Right cardiac atrium (tissue), 5 donors: ENCODE measurements at regions of chr2 and their contacts with region 1.

Region 1: GRCh38 chr2:28047681-28048080 is 157.2 kb downstream of the BABAM2 start:
- DNase-seq: no peak
- ATAC-seq: no peak
- H3K4me3 ChIP-seq: no peak overlapping the region
- H3K27ac ChIP-seq: no peak overlapping the region
- H3K4me1 ChIP-seq: no peaks in the 10 kb centered on the region
- H3K27me3 ChIP-seq: no peaks in the 10 kb centered on the region

Region 2: DNA sequence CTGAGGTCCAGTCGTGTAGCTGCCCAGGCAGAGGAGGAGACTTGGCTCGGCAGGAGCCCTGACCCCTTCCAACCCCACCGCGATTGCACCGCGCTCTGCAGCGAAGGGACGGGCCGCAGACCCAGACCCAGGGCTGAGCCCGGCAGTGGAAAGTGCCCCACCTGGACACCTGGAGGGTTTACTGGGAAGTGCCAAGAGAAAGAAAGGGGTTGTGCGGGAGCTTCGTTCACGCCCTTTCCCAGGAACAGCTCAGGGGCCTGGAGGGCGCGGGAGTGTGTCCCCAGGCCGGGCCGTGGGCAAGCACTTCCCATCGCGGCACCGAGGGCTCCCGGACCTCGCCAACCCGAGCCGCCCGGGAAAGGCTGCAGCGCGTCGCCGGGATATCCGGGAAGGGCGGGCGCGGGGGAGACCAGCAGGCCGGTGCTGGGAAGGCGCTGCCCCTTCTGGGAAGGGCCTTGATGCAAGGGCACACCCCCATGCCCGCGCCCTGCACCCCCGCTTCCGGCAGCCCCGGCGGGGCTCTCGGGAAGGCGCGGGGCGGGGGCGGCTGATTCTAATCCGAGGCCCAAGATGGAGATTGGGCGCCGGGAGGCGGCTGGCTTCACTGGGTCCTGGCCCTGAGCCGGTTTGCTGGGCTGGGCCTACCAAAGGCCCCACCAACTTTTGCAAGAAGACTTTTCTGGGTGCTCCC is 312.3 kb before region 1 on chr2:
- intact Hi-C with region 1: loop called in 1 of 4 experiments (anchors 10 kb)
- DNase-seq: peak; percentile 94 to 96 (median 95)
- ATAC-seq: peak; percentile 94 to 95
- H3K4me3 ChIP-seq: peak overlapping the region; percentile 45
- H3K27ac ChIP-seq: peak overlapping the region; percentile 86
- H3K4me1 ChIP-seq: peaks cover 10% of the 10 kb centered on the region
- H3K27me3 ChIP-seq: no peaks in the 10 kb centered on the region

Region 3: GRCh38 chr2:27992787-27993401 is 54.8 kb before region 1 on chr2:
- intact Hi-C with region 1: no loop called
- DNase-seq: no peak
- ATAC-seq: peak in 1 of 2 donors; percentile 54
- H3K4me3 ChIP-seq: no peak overlapping the region
- H3K27ac ChIP-seq: no peak overlapping the region
- H3K4me1 ChIP-seq: peaks cover 3% of the 10 kb centered on the region
- H3K27me3 ChIP-seq: no peaks in the 10 kb centered on the region

Region 4: GRCh38 chr2:28164280-28164801 is 116.7 kb after region 1 on chr2:
- intact Hi-C with region 1: no loop called
- DNase-seq: peak in 2 of 3 donors; percentile 54 to 61
- ATAC-seq: peak; percentile 86 to 92
- H3K4me3 ChIP-seq: no peak overlapping the region
- H3K27ac ChIP-seq: peak overlapping the region; percentile 73
- H3K4me1 ChIP-seq: peaks cover 16% of the 10 kb centered on the region
- H3K27me3 ChIP-seq: no peaks in the 10 kb centered on the region

Region 5: DNA sequence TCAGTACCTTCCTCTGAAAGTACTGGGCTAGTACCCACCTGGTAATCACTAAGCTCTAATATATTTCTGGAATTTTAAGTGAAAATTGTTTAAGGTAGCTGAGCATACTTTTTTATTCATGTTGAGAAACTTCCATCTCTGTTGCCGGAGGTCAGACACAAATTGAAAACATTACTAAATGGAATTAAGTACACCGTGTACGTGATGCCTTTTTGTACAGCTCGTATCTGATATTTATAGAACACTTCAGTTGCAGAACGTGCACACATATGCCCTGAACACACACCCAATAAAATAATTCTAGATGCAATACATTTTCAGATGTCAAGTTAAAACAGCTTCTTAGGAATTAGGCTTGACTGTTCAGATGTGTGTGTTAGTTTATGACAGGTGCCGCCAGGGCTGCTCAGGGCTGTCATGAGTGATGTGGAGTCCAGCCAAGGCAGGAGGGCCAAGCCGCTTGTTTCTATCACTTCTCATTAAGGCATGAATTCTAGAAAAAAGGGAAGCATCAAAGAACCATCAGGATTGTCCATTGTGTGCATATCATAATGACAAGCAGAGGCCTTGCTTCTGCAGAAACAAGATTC is 264.1 kb after region 1 on chr2:
- intact Hi-C with region 1: no loop called
- DNase-seq: no peak
- ATAC-seq: peak; percentile 63
- H3K4me3 ChIP-seq: no peak overlapping the region
- H3K27ac ChIP-seq: peak overlapping the region; percentile 86
- H3K4me1 ChIP-seq: no peaks in the 10 kb centered on the region
- H3K27me3 ChIP-seq: no peaks in the 10 kb centered on the region

Region 6: DNA sequence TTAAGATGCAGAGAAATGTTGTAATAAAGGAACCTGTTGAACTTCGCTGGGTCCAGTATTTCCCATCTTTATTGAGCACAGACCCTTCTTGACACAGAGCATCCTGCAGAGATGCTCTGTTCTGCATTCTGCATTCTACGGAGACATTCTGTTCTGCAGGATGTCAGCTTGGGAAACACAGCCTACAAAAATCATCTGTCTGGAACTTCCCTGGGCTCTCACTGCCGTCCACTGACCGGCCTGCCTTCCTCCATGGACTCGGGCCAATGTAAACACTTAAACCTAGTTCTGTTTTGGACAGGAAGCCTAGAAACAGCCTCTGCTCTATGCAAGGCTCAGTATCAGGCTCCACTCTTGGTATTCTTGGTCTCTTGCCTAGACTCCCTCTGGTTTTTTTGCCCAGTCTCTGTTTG is 613.9 kb after region 1 on chr2:
- intact Hi-C with region 1: no loop called
- DNase-seq: peak; percentile 72 to 87 (median 83)
- ATAC-seq: peak; percentile 77 to 89
- H3K4me3 ChIP-seq: no peak overlapping the region
- H3K27ac ChIP-seq: peak overlapping the region; percentile 85
- H3K4me1 ChIP-seq: peaks cover 10% of the 10 kb centered on the region
- H3K27me3 ChIP-seq: no peaks in the 10 kb centered on the region